Left lung (tissue), 14 donors: ENCODE measurements at regions of chr5 and their contacts with region 1.

Region 1: GRCh38 chr5:170791325-170791954 is 7.9 kb downstream of the GABRP start:
- DNase-seq: peak in 3 of 4 donors; percentile 53 to 78 (median 61)
- ATAC-seq: peak; percentile 96
- H3K4me3 ChIP-seq: no peak overlapping the region
- H3K27ac ChIP-seq: no peak overlapping the region
- H3K4me1 ChIP-seq: no peaks in the 10 kb centered on the region
- H3K27me3 ChIP-seq: no peaks in the 10 kb centered on the region
- CTCF ChIP-seq: peak; percentile 38 to 48

Region 2: GRCh38 chr5:170747851-170748250 is 43.6 kb before region 1 on chr5:
- intact Hi-C with region 1: loop called in 1 of 2 experiments (anchors 5 kb)
- DNase-seq: no peak
- ATAC-seq: no peak
- H3K4me3 ChIP-seq: no peak overlapping the region
- H3K27ac ChIP-seq: no peak overlapping the region
- H3K4me1 ChIP-seq: peaks cover 8 to 21% of the 10 kb centered on the region in 2 donors
- H3K27me3 ChIP-seq: peaks cover 0 to 41% of the 10 kb centered on the region in 2 donors
- CTCF ChIP-seq: peak in 1 of 2 donors; percentile 24